ENCODE measurements at regions of chr19 and their contacts with region 1.

Region 1: GRCh38 chr19:9584073-9584833 is at the start of gene ZNF121:
- DNase-seq: peak; percentile 90
- H3K4me3 Mint-ChIP-seq: peak within 1 kb of the TSS; percentile 93
- H3K27ac Mint-ChIP-seq: peak within 1 kb of the TSS; percentile 93
- H3K4me1 Mint-ChIP-seq: peaks cover 31% of the 10 kb centered on the region
- H3K27me3 Mint-ChIP-seq: peaks cover 6% of the 10 kb centered on the region
- total RNA-seq, gene ZNF121: 61.1 to 62.2 TPM

Region 2: GRCh38 chr19:9140159-9140874 is 443.9 kb before region 1 on chr19 and contains the start of gene ZNF317:
- CTCF ChIA-PET with region 1: no interaction called
- POLR2A ChIA-PET with region 1: no interaction called
- intact Hi-C with region 1: loop called (anchors 1 kb)
- DNase-seq: peak; percentile 93
- H3K4me3 Mint-ChIP-seq: peak within 1 kb of the TSS; percentile 98
- H3K27ac Mint-ChIP-seq: peak within 1 kb of the TSS; percentile 94
- H3K4me1 Mint-ChIP-seq: peaks cover 36% of the 10 kb centered on the region
- H3K27me3 Mint-ChIP-seq: no peaks in the 10 kb centered on the region
- total RNA-seq, gene ZNF317: 31.8 to 31.9 TPM

Region 3: GRCh38 chr19:9323919-9324583 is 260.2 kb before region 1 on chr19 and contains the start of gene ZNF559:
- CTCF ChIA-PET with region 1: no interaction called
- POLR2A ChIA-PET with region 1: no interaction called
- intact Hi-C with region 1: loop called (anchors 2 kb)
- DNase-seq: peak; percentile 98
- H3K4me3 Mint-ChIP-seq: peak within 1 kb of the TSS; percentile 83
- H3K27ac Mint-ChIP-seq: peak within 1 kb of the TSS; percentile 92
- H3K4me1 Mint-ChIP-seq: peaks cover 24% of the 10 kb centered on the region
- H3K27me3 Mint-ChIP-seq: no peaks in the 10 kb centered on the region
- total RNA-seq, gene ZNF559: 8.0 to 9.4 TPM

Region 4: GRCh38 chr19:9538183-9539058 is 45.8 kb before region 1 on chr19 and contains the start of gene ZNF426:
- CTCF ChIA-PET with region 1: interaction called, 5 read pairs
- POLR2A ChIA-PET with region 1: no interaction called
- intact Hi-C with region 1: loop called (anchors 1 kb)
- DNase-seq: peak; percentile 93
- H3K4me3 Mint-ChIP-seq: peak within 1 kb of the TSS; percentile 96
- H3K27ac Mint-ChIP-seq: peak within 1 kb of the TSS; percentile 94
- H3K4me1 Mint-ChIP-seq: peaks cover 9% of the 10 kb centered on the region
- H3K27me3 Mint-ChIP-seq: no peaks in the 10 kb centered on the region
- total RNA-seq, gene ZNF426: 11.4 to 12.5 TPM

Region 5: GRCh38 chr19:9674663-9675357 is 90.6 kb after region 1 on chr19 and contains the start of gene ZNF562:
- CTCF ChIA-PET with region 1: no interaction called
- POLR2A ChIA-PET with region 1: no interaction called
- intact Hi-C with region 1: loop called (anchors 10 kb)
- DNase-seq: peak; percentile 89
- H3K4me3 Mint-ChIP-seq: peak within 1 kb of the TSS; percentile 96
- H3K27ac Mint-ChIP-seq: peak within 1 kb of the TSS; percentile 92
- H3K4me1 Mint-ChIP-seq: peaks cover 26% of the 10 kb centered on the region
- H3K27me3 Mint-ChIP-seq: no peaks in the 10 kb centered on the region
- total RNA-seq, gene ZNF562: 35.3 to 36.1 TPM

Region 6: DNA sequence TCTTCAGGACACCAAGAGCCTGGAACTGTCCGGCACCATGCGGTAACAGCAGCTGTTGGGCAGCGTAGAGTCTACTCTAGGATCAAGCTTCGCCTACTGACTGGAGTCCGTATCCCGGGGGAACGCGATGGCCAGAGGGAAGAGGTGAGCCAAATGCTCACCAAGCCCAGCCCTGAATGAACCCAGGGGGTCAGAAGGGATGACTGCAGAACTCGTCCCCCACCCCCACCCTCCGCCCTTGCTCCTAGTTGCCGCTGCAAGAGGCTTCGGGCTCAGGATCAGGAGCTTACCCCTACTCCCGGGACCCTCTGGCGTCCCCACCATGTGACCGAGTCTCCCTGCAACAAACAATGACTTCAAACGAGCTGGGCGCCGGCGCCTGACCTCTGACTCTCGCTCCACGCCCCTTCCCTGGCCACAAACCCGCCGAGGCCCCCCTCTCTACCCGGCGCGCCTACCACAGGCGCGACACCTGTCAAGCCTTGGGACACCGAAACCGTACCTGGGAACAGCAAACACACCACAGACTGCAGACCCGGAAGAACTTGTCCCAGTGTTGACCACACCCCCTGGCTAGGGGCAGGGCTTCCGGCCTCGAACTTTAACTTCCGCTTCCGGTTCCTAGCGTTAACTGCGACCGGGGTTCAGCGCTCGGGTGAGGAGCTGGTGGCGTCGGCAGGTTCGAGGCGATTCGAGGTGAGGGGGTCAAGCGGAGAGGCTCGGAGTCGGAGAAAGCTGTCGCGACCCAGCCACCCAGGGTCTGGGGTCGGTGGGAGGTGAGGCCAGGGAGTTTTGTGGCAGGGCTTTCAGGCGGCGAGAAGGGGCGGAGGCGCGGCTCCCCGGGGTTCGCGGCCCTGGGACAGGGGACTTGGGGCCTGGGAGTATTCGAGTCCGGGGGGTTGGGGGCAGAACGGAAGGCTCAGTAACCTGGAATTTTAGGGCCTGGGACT is 243.3 kb after region 1 on chr19 and contains the start of gene UBL5:
- CTCF ChIA-PET with region 1: no interaction called
- POLR2A ChIA-PET with region 1: no interaction called
- intact Hi-C with region 1: no loop called
- DNase-seq: peak; percentile 94
- H3K4me3 Mint-ChIP-seq: peak within 1 kb of the TSS; percentile 100
- H3K27ac Mint-ChIP-seq: peak within 1 kb of the TSS; percentile 75
- H3K4me1 Mint-ChIP-seq: peaks cover 20% of the 10 kb centered on the region
- H3K27me3 Mint-ChIP-seq: no peaks in the 10 kb centered on the region
- total RNA-seq, gene UBL5: 334 to 346 TPM